ENCODE measurements at regions of chr7 and their contacts with region 1.

Region 1: GRCh38 chr7:93231799-93232672 is at the start of gene VPS50:
- DNase-seq: peak; percentile 96
- H3K4me3 Mint-ChIP-seq: peak within 1 kb of the TSS; percentile 96
- H3K27ac Mint-ChIP-seq: peak within 1 kb of the TSS; percentile 83
- H3K4me1 Mint-ChIP-seq: peaks cover 10% of the 10 kb centered on the region
- H3K27me3 Mint-ChIP-seq: no peaks in the 10 kb centered on the region
- total RNA-seq, gene VPS50: 15.0 to 15.8 TPM

Region 2: DNA sequence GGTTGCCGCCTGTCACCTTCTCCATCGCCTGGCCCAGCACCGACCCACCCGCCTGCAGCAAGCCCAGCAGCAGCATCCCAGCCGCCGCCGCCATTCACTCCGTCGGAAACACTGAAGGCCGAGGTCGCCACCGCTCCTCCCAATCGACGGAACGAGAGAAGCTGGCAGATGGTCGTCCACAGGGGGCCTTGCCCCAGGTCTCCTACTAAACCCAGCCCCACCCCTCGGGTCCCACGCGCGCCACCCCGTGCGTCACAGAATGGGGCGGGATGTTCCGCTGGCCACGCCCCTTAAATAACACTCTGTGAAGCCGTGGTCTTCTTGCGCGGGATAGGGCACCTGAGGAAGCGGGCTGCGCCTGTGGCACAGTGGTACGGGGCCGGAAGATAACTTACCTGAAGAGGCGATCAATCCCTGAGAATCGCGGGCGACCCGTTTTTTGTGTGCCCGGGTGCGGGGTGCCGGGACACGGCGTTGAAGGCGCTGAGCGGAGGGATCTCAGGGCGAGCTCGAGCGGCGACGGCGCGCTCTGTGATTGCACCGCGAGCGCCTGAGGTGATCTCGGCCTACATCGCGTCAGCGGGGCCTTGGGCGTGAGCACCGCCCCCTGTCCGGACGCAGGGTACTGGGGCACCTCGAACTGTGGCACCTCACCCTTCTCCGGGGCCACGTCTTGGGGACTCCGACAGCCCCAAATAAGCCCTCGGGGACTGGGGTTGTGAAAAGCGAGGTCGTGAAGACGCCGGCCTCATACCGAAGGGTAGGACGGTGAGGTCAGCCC is 1097.6 kb before region 1 on chr7 and contains the start of gene CYP51A1:
- CTCF ChIA-PET with region 1: no interaction called
- intact Hi-C with region 1: loop called (anchors 1 kb)
- DNase-seq: peak; percentile 93
- H3K4me3 Mint-ChIP-seq: peak within 1 kb of the TSS; percentile 96
- H3K27ac Mint-ChIP-seq: peak within 1 kb of the TSS; percentile 99
- H3K4me1 Mint-ChIP-seq: peaks cover 36% of the 10 kb centered on the region
- H3K27me3 Mint-ChIP-seq: no peaks in the 10 kb centered on the region
- total RNA-seq, gene CYP51A1: 52.8 to 55.5 TPM

Region 3: DNA sequence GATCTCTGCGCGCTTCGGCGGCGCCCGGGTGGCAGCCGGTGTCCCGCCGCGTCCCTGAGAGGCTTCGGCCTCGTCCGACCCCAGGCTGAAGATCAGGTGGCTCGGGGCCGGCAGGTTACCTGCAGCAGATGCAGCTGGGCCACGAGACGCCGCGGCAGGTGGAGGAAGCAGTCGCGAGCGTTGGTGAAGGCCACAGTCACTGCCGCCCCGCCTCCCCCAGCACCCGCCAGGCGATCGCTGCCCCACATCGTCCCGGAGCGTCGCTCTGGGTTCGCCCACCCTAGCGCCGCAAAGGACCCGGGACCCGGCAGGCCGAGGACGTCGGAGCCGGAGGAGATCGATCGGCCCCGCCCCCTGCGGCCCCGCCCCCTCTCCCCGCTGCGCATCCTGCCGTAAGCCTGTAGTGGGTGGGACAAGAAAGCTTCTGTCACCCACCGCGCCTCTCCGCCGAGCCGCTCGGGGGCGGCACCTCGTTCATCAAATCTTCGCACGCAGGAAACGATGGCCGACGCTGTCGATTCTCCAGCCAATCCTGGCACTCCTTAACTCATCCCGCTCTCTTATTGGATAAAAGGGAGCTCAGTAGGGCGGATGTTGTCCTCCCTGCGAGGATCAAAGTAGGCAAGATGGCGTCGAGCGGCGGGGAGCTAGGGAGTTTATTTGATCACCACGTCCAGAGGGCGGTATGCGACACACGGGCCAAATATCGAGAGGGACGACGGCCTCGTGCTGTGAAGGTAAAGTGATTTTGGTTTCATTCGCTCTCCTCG is 703.7 kb before region 1 on chr7 and contains the starts of genes PEX1 and RBM48:
- CTCF ChIA-PET with region 1: no interaction called
- intact Hi-C with region 1: loop called (anchors 1 kb)
- DNase-seq: peak; percentile 97
- H3K4me3 Mint-ChIP-seq: peak within 1 kb of the TSS; percentile 84
- H3K27ac Mint-ChIP-seq: peak within 1 kb of the TSS; percentile 91
- H3K4me1 Mint-ChIP-seq: peaks cover 22% of the 10 kb centered on the region
- H3K27me3 Mint-ChIP-seq: no peaks in the 10 kb centered on the region
- total RNA-seq, gene PEX1: 12.9 to 13.2 TPM
- total RNA-seq, gene RBM48: 11.3 to 12.9 TPM

Region 4: GRCh38 chr7:92833024-92833765 is 398.8 kb before region 1 on chr7:
- CTCF ChIA-PET with region 1: no interaction called
- intact Hi-C with region 1: loop called (anchors 5 kb)
- DNase-seq: peak; percentile 94
- H3K4me3 Mint-ChIP-seq: peak overlapping the region; percentile 89
- H3K27ac Mint-ChIP-seq: peak overlapping the region; percentile 98
- H3K4me1 Mint-ChIP-seq: peaks cover 36% of the 10 kb centered on the region
- H3K27me3 Mint-ChIP-seq: peaks cover 5% of the 10 kb centered on the region

Region 5: DNA sequence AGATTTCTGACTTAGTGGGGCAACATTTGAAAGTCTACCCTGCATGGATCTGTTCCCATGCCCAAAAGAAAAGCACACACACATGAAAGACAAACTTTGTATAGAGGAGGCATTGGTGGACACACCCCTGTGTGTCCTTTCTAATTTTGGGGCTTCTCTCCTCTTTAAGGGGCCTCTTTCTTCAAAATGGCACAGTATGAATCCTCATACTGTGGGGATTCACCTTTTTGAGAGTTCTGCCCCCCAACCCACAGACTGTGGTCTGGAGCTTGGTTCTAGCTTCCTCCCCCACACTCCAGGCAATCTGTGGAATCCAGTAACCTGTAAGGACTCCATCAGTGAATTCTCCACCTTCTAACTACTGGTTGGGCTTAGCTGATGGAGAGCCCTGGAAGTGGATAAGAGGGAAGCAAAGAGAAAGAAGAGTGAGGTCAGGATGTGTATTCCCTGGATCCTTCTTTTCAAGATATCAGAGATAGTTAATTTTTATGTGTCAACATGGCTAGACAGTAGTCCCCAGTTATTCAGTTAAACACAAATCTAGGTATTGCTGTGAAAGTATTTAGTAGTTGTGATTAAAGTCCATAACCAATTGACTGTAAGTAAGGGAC is 363.2 kb before region 1 on chr7:
- CTCF ChIA-PET with region 1: no interaction called
- intact Hi-C with region 1: no loop called
- DNase-seq: no peak
- H3K4me3 Mint-ChIP-seq: no peak overlapping the region
- H3K27ac Mint-ChIP-seq: no peak overlapping the region
- H3K4me1 Mint-ChIP-seq: peaks cover 6% of the 10 kb centered on the region
- H3K27me3 Mint-ChIP-seq: peaks cover 17% of the 10 kb centered on the region

Region 6: DNA sequence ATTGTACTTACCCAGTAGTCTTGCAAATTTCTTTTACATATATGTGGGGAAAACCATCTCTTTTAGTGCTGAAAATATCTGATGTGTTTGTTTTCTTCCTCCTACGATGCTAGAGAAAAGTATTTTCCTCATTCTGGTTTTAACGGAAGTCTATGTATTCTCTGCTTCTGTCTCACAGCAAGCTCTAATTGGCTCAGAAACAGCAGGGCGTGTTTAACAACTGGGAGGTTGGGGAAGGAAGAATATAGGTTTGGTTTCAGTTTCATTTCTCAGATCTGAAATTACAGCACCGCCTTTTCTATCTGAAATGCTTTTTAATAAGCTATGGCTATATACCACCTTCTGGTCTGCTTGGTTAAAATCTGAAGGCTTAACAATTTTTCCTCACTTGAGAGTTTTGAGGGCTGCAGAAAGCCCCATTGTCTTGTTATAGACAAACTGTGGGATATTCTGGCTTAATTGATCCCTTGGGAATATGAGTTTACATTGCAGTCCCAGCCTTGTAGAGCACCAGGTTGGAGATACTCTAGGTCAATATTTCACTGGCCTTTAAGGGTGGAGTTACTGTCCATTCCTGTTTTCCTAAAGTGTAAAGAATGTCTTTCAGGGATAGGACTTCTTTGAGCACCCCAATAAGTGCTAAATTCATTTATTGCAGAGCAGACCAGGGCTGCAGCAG is 114.0 kb before region 1 on chr7 and contains the start of gene SAMD9:
- CTCF ChIA-PET with region 1: interaction called, 3 read pairs
- intact Hi-C with region 1: loop called (anchors 1 kb)
- DNase-seq: peak; percentile 70
- H3K4me3 Mint-ChIP-seq: peak within 1 kb of the TSS; percentile 71
- H3K27ac Mint-ChIP-seq: peak within 1 kb of the TSS; percentile 65
- H3K4me1 Mint-ChIP-seq: peaks cover 47% of the 10 kb centered on the region
- H3K27me3 Mint-ChIP-seq: no peaks in the 10 kb centered on the region
- total RNA-seq, gene SAMD9: 2.9 to 3.1 TPM

Region 7: DNA sequence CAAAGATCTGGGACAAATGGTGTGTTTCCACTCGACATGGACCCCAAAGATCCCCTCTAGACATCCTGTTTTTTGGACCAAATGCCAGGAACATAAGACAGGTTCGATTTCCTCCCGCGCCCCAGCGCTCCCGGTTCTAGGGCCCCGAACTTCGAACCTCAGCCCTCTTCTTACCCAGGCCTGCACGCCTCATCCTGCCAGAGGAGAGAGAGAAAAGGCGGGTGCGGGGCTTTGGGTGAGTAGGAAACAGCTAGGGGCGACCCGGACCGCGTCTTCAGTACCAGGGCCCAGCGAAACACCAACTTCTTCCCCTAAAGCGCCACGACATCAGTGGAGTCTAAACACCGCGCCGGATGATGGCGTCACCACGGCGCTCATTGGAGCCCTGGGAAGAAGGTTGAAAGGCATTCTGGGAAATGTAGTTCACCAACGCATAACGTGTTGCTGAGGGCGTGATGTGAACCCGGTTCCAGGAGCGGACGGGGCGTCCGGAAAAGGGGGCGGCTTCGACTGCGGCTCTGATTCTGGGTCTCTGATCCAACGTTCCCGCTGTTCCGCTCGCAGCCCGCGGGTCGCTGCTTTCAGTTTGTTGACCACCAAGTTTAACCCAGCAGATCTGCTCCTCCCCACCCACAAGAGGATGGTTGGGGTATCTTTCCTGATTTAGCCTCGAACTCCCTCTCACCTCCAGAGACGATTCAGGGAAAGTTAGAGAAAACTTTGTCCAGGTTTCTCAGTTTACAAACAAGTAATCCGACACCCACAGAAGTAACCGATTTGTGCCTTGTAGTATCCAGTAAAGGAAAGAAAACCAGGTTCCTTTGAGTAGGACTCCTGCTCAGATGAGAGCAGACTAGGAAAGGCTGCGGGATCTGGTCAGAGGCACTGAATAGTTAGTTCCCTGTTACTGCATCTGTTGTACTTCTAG is 772.3 kb after region 1 on chr7 and contains the start of gene BET1:
- CTCF ChIA-PET with region 1: no interaction called
- intact Hi-C with region 1: loop called (anchors 1 kb)
- DNase-seq: peak; percentile 94
- H3K4me3 Mint-ChIP-seq: peak within 1 kb of the TSS; percentile 99
- H3K27ac Mint-ChIP-seq: peak within 1 kb of the TSS; percentile 94
- H3K4me1 Mint-ChIP-seq: peaks cover 34% of the 10 kb centered on the region
- H3K27me3 Mint-ChIP-seq: peaks cover 6% of the 10 kb centered on the region
- total RNA-seq, gene BET1: 21.5 to 25.9 TPM